ENCODE measurements at regions of chr9 and their contacts with region 1.

Region 1: DNA sequence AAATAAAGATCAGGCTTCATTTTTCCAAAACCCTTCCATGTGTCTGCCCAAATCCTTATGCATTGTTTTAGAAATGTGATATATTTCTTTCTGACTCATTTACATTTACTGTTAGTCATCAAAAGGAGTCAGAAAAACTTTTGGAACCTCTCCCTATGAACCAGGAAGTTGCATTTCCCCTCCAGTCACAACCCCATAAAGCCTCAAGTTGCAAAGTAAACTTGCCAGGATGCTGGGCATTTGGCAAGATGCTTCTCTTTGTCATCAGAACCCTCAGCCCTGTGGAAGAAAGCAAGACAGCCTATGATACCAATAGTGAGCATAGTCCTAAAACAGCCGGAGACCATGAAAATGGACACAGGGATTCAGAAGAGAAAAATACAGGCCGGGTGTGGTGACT is 84.2 kb downstream of the MUSK start:
- DNase-seq: no peak
- ATAC-seq: no peak
- H3K4me3 ChIP-seq: no peak overlapping the region
- H3K27ac ChIP-seq: no peak overlapping the region
- H3K4me1 ChIP-seq: no peaks in the 10 kb centered on the region
- H3K27me3 ChIP-seq: no peaks in the 10 kb centered on the region
- CTCF ChIP-seq: no peak
- EP300 ChIP-seq: no peak
- POLR2A ChIP-seq: no peak
- RAD21 ChIP-seq: no peak

Region 2: GRCh38 chr9:110777196-110777875 is 24.6 kb after region 1 on chr9:
- CTCF ChIA-PET with region 1: no interaction called
- POLR2A ChIA-PET with region 1: no interaction called
- in situ Hi-C with region 1: no loop called
- intact Hi-C with region 1: no loop called
- DNase-seq: no peak
- ATAC-seq: no peak
- H3K4me3 ChIP-seq: no peak overlapping the region
- H3K27ac ChIP-seq: no peak overlapping the region
- H3K4me1 ChIP-seq: no peaks in the 10 kb centered on the region
- H3K27me3 ChIP-seq: no peaks in the 10 kb centered on the region; a peak in 1 of 5 replicates
- CTCF ChIP-seq: no peak
- EP300 ChIP-seq: no peak
- POLR2A ChIP-seq: no peak
- RAD21 ChIP-seq: no peak

Region 3: DNA sequence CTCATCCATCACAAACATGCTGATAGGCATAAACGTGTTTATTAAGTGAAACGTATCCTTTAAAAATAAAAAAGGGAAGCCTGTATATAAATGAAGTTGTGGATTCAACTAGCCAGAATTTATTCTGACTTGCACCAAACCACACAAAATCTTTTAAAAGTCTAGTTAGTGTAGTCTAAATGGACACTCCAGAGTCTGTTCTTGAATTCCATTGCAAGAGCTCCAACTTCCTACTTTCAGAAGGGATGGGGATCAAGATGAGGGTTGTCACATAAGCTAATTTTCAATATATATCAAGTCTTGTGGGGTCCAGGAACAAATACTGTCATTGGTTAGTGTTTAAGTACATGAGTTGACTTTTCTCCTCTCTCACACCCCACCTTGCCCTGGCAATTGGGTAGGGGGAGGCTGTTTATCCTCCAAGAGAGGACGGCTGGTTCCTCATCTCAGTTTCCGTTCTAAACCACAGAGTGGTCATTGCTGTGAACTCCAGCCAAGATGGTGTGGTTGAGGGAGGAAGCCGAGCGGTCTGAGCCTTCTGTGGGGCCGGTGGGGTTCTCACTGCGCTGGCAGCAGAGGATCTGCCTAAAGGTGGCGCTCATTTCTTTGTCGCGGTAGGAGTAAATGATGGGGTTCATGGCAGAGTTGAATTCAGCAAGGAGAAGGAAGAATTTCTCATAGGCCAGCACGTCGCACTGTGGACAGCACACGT is 122.4 kb after region 1 on chr9:
- CTCF ChIA-PET with region 1: no interaction called
- POLR2A ChIA-PET with region 1: no interaction called
- in situ Hi-C with region 1: loop called (anchors 25 kb)
- intact Hi-C with region 1: no loop called
- DNase-seq: no peak
- ATAC-seq: peak; percentile 64
- H3K4me3 ChIP-seq: no peak overlapping the region
- H3K27ac ChIP-seq: no peak overlapping the region
- H3K4me1 ChIP-seq: no peaks in the 10 kb centered on the region
- H3K27me3 ChIP-seq: no peaks in the 10 kb centered on the region
- CTCF ChIP-seq: peak; percentile 31; the same call in 1 of the 2 replicates
- EP300 ChIP-seq: no peak
- POLR2A ChIP-seq: no peak
- RAD21 ChIP-seq: no peak